ENCODE measurements at regions of chr22 and their contacts with region 1.

Region 1: GRCh38 chr22:50691521-50691920 is 18.9 kb downstream of the SHANK3 start:
- DNase-seq: peak; percentile 44
- ATAC-seq: peak; percentile 59
- H3K4me3 ChIP-seq: no peak overlapping the region
- H3K27ac ChIP-seq: no peak overlapping the region
- H3K4me1 ChIP-seq: no peaks in the 10 kb centered on the region
- H3K27me3 ChIP-seq: peaks cover 16% of the 10 kb centered on the region
- CTCF ChIP-seq: peak; percentile 60
- POLR2A ChIP-seq: no peak
- RAD21 ChIP-seq: peak; percentile 56

Region 2: DNA sequence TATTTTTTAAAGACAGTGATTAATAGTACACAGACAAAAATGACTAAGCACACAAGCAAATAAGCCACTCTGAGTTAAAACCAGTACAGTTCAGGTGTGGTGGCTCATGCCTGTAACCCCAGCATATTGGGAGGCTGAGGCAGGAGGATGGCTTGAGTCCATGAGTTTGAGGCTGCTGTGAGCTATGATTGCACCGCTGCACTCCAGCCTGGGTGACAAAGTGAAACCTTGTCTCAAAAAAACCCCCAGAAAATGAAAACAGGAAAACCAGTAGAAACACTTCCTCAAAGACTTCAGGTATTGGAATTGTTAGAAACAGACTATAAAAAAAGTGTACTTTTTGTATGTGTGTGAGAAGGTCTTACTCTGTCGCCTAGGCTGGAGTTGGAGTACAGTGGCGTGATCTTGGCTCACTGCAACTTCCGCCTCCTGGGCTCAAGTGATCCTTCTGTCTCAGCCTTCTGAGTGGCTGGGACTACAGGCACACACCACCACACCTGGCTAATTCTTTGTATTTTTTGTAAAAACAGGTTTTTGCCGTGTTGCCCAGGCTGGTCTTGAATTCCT is 315.4 kb before region 1 on chr22:
- CTCF ChIA-PET with region 1: no interaction called
- POLR2A ChIA-PET with region 1: no interaction called
- dilution Hi-C with region 1: no loop called
- in situ Hi-C with region 1: no loop called
- intact Hi-C with region 1: no loop called
- DNase-seq: no peak
- ATAC-seq: no peak
- H3K4me3 ChIP-seq: no peak overlapping the region
- H3K27ac ChIP-seq: no peak overlapping the region
- H3K4me1 ChIP-seq: no peaks in the 10 kb centered on the region
- H3K27me3 ChIP-seq: no peaks in the 10 kb centered on the region
- CTCF ChIP-seq: no peak
- POLR2A ChIP-seq: no peak
- RAD21 ChIP-seq: no peak

Region 3: DNA sequence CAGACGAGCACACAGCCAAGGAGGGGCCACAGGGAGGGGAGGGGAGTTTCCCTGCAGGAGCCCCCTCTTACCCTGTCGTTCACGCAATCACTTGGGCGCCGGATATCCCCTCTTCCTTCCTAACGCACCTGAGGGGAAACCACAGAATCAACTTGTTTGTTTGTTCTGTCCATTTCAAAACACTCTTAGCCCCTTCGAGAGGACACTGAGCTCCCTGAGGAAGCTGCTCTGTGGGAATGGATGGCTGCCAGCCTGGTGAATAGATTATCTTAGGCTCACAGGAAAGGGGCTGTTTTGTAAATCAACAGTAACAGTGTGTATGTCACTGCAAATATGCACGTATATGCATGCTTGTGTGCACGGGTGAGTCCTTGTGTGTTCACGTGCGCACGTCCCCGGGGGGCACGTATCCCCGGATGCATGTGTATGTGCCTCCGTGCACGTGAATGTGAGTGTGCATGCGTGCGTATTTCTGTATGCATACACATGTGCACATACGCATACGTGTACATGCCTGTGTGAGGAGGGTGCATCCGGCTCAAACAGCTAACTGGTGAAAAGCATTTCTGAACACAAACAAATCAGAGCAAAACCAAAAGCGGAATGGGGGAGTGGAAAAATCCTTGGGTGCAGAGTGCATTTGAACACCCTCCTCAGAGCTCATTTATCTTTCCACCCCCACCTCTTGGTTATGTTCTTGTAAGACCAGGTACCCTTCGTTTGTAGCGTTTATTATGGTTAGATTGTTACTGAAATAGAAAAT is 70.7 kb before region 1 on chr22:
- CTCF ChIA-PET with region 1: no interaction called
- POLR2A ChIA-PET with region 1: no interaction called
- dilution Hi-C with region 1: no loop called
- in situ Hi-C with region 1: no loop called
- intact Hi-C with region 1: loop called (anchors 5 kb)
- DNase-seq: no peak
- ATAC-seq: peak; percentile 92
- H3K4me3 ChIP-seq: no peak overlapping the region
- H3K27ac ChIP-seq: no peak overlapping the region
- H3K4me1 ChIP-seq: peaks cover 7% of the 10 kb centered on the region; the same call in 1 of the 2 replicates
- H3K27me3 ChIP-seq: peaks cover 2% of the 10 kb centered on the region
- CTCF ChIP-seq: no peak
- POLR2A ChIP-seq: no peak
- RAD21 ChIP-seq: no peak

Region 4: DNA sequence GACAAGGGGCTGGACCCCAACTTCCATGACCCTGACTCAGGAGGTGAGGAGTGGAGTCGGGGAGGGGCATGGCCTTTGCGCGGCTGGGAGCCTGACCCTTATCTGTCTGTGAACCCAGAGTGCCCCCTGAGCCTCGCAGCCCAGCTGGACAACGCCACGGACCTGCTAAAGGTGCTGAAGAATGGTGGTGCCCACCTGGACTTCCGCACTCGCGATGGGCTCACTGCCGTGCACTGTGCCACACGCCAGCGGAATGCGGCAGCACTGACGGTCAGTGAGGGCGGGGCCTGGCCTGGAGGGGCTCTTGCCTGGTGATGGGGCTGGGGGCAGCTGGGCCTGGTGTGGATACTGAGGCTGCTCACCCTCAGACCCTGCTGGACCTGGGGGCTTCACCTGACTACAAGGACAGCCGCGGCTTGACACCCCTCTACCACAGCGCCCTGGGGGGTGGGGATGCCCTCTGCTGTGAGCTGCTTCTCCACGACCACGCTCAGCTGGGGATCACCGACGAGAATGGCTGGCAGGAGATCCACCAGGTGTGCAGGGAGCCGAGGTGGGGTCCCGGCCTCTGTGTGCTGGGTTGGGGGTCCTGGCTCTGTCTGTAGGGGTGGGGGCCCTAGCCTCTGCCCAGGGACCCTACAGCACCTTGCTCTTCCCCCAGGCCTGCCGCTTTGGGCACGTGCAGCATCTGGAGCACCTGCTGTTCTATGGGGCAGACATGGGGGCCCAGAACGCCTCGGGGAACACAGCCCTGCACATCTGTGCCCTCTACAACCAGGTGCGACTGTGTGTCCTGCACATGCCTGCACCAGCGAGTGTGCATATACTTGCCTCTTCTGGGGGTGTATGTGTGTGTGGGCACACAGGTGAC is 12.6 kb before region 1 on chr22:
- CTCF ChIA-PET with region 1: no interaction called
- POLR2A ChIA-PET with region 1: no interaction called
- dilution Hi-C with region 1: no loop called
- in situ Hi-C with region 1: no loop called
- intact Hi-C with region 1: no loop called
- DNase-seq: no peak
- ATAC-seq: no peak
- H3K4me3 ChIP-seq: no peak overlapping the region
- H3K27ac ChIP-seq: no peak overlapping the region
- H3K4me1 ChIP-seq: no peaks in the 10 kb centered on the region
- H3K27me3 ChIP-seq: peaks cover 22% of the 10 kb centered on the region
- CTCF ChIP-seq: no peak
- POLR2A ChIP-seq: no peak
- RAD21 ChIP-seq: no peak